ENCODE measurements at regions of chr11 and their contacts with region 1.

Region 1: DNA sequence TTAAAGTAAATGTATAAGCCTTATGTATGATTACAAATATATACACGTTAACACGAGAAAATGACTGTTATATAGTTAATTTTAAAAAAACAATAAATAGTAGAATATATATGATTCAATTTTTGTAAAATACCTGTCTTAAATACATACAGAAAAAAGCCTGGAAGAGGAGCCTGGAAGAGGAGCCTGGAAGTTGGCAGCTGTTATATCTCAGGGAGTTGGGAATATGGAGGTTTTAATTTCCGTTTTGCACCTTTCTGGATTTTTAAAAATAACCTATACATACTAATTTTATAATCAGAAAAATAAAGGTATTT is 111.6 kb downstream of the WT1 start:
- DNase-seq: no peak
- H3K4me3 ChIP-seq: no peak overlapping the region
- H3K4me3 Mint-ChIP-seq: no peak overlapping the region
- H3K27ac Mint-ChIP-seq: no peak overlapping the region
- H3K4me1 ChIP-seq: no peaks in the 10 kb centered on the region
- H3K4me1 Mint-ChIP-seq: no peaks in the 10 kb centered on the region
- H3K27me3 ChIP-seq: no peaks in the 10 kb centered on the region
- H3K27me3 Mint-ChIP-seq: peaks cover 6% of the 10 kb centered on the region
- CTCF ChIP-seq: peak in 1 of 2 experiments; percentile 16

Region 2: GRCh38 chr11:32395127-32395526 is 71.4 kb after region 1 on chr11:
- CTCF ChIA-PET with region 1: interaction called, 4 read pairs
- POLR2A ChIA-PET with region 1: no interaction called
- intact Hi-C with region 1: loop called (anchors 1 kb)
- DNase-seq: no peak
- H3K4me3 ChIP-seq: no peak overlapping the region
- H3K4me3 Mint-ChIP-seq: no peak overlapping the region
- H3K27ac Mint-ChIP-seq: no peak overlapping the region
- H3K4me1 ChIP-seq: peaks cover 19% of the 10 kb centered on the region
- H3K4me1 Mint-ChIP-seq: peaks cover 17% of the 10 kb centered on the region
- H3K27me3 ChIP-seq: no peaks in the 10 kb centered on the region
- H3K27me3 Mint-ChIP-seq: no peaks in the 10 kb centered on the region
- CTCF ChIP-seq: no peak

Region 3: GRCh38 chr11:32615422-32615821 is 291.6 kb after region 1 on chr11:
- CTCF ChIA-PET with region 1: interaction called, 4 read pairs
- POLR2A ChIA-PET with region 1: no interaction called
- intact Hi-C with region 1: loop called (anchors 1 kb)
- DNase-seq: no peak
- H3K4me3 ChIP-seq: no peak overlapping the region
- H3K4me3 Mint-ChIP-seq: no peak overlapping the region
- H3K27ac Mint-ChIP-seq: no peak overlapping the region
- H3K4me1 ChIP-seq: peaks cover 8% of the 10 kb centered on the region; the same call in 1 of the 2 replicates
- H3K4me1 Mint-ChIP-seq: peaks cover 14% of the 10 kb centered on the region
- H3K27me3 ChIP-seq: no peaks in the 10 kb centered on the region
- H3K27me3 Mint-ChIP-seq: no peaks in the 10 kb centered on the region
- CTCF ChIP-seq: peak in 1 of 2 experiments; percentile 29

Measured in Caco-2 (cell line).